Activated CD4-positive, alpha-beta memory T cell treated with anti-CD3 and anti-CD28 coated beads for 36 hours (primary cell): ENCODE measurements at regions of chr1 and their contacts with region 1.

Region 1: GRCh38 chr1:89483010-89483756 is 41.4 kb upstream of the LRRC8B start:
- DNase-seq: peak; percentile 85
- H3K4me3 Mint-ChIP-seq: no peak overlapping the region
- H3K27ac Mint-ChIP-seq: no peak overlapping the region
- H3K4me1 Mint-ChIP-seq: peaks cover 18% of the 10 kb centered on the region
- H3K27me3 Mint-ChIP-seq: no peaks in the 10 kb centered on the region

Region 2: GRCh38 chr1:89311757-89312156 is 171.4 kb before region 1 on chr1:
- CTCF ChIA-PET with region 1: no interaction called
- POLR2A ChIA-PET with region 1: no interaction called
- intact Hi-C with region 1: no loop called
- DNase-seq: no peak
- H3K4me3 Mint-ChIP-seq: no peak overlapping the region
- H3K27ac Mint-ChIP-seq: peak overlapping the region; percentile 38
- H3K4me1 Mint-ChIP-seq: peaks cover 38% of the 10 kb centered on the region
- H3K27me3 Mint-ChIP-seq: no peaks in the 10 kb centered on the region

Region 3: GRCh38 chr1:89499320-89499719 is 16.1 kb after region 1 on chr1:
- CTCF ChIA-PET with region 1: interaction called, 10 read pairs
- POLR2A ChIA-PET with region 1: no interaction called
- intact Hi-C with region 1: no loop called
- DNase-seq: no peak
- H3K4me3 Mint-ChIP-seq: no peak overlapping the region
- H3K27ac Mint-ChIP-seq: no peak overlapping the region
- H3K4me1 Mint-ChIP-seq: no peaks in the 10 kb centered on the region
- H3K27me3 Mint-ChIP-seq: peaks cover 2% of the 10 kb centered on the region

Region 4: DNA sequence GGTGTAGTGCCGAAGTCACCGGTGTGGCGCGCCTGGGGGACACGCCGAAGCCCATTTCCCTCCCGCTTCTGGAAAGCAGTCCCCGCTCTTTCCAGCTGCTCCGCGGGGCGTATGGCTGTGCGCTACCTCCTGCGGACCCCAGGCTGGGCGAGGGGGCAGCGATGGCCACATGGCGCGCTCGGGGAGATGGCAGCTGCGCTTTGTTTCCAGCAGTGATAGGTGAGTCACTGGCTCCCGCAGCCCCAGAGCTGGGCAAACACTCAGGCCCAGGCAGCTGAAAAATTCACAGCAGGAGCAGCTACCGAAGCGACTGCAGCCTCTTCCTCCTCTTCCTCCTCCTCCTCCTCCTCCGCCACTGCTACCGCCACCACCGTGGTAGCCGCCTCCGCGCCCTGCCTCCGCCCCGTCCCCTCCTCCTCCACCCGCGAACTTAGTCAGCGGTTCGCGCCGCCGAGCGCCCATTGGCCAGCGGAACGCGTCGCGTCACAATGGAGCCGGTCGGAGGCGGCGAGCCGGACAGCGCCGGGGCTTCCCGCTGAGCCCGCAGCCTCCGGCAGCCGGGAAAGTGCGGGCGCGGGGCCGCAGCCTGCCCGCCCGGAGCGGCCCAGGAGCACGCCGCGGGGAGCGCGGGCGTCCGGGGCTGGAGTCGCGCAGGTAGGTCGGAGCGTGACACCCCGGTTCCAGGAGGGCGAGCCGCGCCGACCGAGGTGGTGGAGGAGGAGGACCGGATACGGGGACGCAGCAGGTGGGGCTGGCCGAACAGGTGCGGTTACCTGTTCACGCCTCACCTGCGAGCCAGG is 41.4 kb after region 1 on chr1 and contains the start of gene LRRC8B:
- CTCF ChIA-PET with region 1: interaction called, 25 read pairs
- POLR2A ChIA-PET with region 1: no interaction called
- intact Hi-C with region 1: loop called (anchors 2 kb)
- DNase-seq: peak; percentile 93
- H3K4me3 Mint-ChIP-seq: no peak within 1 kb of the TSS
- H3K27ac Mint-ChIP-seq: no peak within 1 kb of the TSS
- H3K4me1 Mint-ChIP-seq: peaks cover 31% of the 10 kb centered on the region
- H3K27me3 Mint-ChIP-seq: no peaks in the 10 kb centered on the region
- total RNA-seq, gene LRRC8B: 41.1 to 42.1 TPM

Region 5: GRCh38 chr1:89615676-89616598 is 132.8 kb after region 1 on chr1:
- CTCF ChIA-PET with region 1: interaction called, 10 read pairs
- POLR2A ChIA-PET with region 1: no interaction called
- intact Hi-C with region 1: no loop called
- DNase-seq: peak; percentile 33
- H3K4me3 Mint-ChIP-seq: no peak overlapping the region
- H3K27ac Mint-ChIP-seq: no peak overlapping the region
- H3K4me1 Mint-ChIP-seq: peaks cover 82% of the 10 kb centered on the region
- H3K27me3 Mint-ChIP-seq: no peaks in the 10 kb centered on the region

Region 6: GRCh38 chr1:89632657-89633247 is 149.6 kb after region 1 on chr1 and contains the start of gene LRRC8C:
- CTCF ChIA-PET with region 1: interaction called, 14 read pairs
- POLR2A ChIA-PET with region 1: interaction called, 4 read pairs
- intact Hi-C with region 1: no loop called
- DNase-seq: peak; percentile 90
- H3K4me3 Mint-ChIP-seq: peak within 1 kb of the TSS; percentile 93
- H3K27ac Mint-ChIP-seq: peak within 1 kb of the TSS; percentile 95
- H3K4me1 Mint-ChIP-seq: peaks cover 68% of the 10 kb centered on the region
- H3K27me3 Mint-ChIP-seq: no peaks in the 10 kb centered on the region
- total RNA-seq, gene LRRC8C: 36.4 to 40.4 TPM

Region 7: GRCh38 chr1:89780721-89781120 is 297.5 kb after region 1 on chr1:
- CTCF ChIA-PET with region 1: no interaction called
- POLR2A ChIA-PET with region 1: no interaction called
- intact Hi-C with region 1: loop called (anchors 5 kb)
- DNase-seq: peak; percentile 58
- H3K4me3 Mint-ChIP-seq: peak overlapping the region; percentile 48
- H3K27ac Mint-ChIP-seq: peak overlapping the region; percentile 90
- H3K4me1 Mint-ChIP-seq: peaks cover 43% of the 10 kb centered on the region
- H3K27me3 Mint-ChIP-seq: no peaks in the 10 kb centered on the region